A673 (cell line): ENCODE measurements at regions of chrX and their contacts with region 1.

Region 1: DNA sequence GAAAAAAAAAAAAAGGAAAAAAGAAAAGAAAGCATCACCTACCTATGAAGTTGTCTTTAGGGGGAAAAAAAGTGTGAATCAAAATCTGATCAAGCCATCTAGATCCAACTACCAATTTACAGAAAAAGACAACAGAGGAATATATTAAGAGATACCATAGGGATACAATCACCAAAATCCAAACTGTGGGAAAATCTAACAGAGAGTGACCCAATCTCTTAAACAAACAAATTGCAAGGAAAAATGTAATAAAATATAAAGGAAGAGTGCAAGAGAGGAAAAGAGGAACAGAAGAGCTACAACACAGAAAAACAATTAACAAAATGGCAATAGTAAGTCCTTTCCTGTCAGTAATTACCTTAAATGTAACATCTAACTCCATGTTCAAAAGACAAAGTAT is 19.0 kb downstream of the THOC2 start:
- DNase-seq: no peak
- H3K4me3 ChIP-seq: no peak overlapping the region
- H3K27ac ChIP-seq: no peak overlapping the region
- H3K4me1 ChIP-seq: no peaks in the 10 kb centered on the region
- H3K27me3 ChIP-seq: no peaks in the 10 kb centered on the region
- CTCF ChIP-seq: no peak

Region 2: DNA sequence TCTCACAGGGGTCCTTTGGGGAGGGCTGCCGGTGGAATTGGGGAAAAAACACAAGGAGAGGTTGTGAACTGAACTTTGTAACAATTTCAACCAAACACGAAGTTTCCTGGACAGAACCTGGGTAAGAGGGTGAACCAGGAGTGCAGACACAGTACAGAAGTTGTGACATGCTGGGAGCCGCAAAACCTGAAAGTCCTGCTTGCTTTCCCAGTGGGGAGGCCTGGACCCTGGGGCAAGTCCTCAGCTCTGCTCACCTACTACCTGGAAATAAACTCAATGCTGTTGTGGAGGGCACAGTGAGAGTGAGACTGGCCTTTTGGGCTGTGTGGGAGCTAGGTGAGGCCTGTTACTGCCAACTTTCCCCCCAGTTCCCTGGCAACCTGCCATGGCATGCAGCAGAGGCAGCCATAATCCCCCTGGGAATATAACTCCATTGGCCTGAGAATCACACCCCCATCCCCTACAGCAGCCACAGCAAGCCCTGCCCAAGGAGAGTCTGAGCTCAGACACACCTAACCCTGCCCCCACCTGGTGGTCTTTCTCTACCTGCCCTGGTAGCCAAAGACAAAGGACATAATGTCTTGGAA is 143.7 kb before region 1 on chrX:
- CTCF ChIA-PET with region 1: no interaction called
- POLR2A ChIA-PET with region 1: no interaction called
- intact Hi-C with region 1: no loop called
- DNase-seq: no peak
- H3K4me3 ChIP-seq: no peak overlapping the region
- H3K27ac ChIP-seq: no peak overlapping the region
- H3K4me1 ChIP-seq: no peaks in the 10 kb centered on the region
- H3K27me3 ChIP-seq: no peaks in the 10 kb centered on the region
- CTCF ChIP-seq: no peak

Region 3: GRCh38 chrX:123648028-123648810 is 65.6 kb before region 1 on chrX:
- CTCF ChIA-PET with region 1: no interaction called
- POLR2A ChIA-PET with region 1: no interaction called
- intact Hi-C with region 1: loop called (anchors 10 kb)
- DNase-seq: peak; percentile 44
- H3K4me3 ChIP-seq: no peak overlapping the region
- H3K27ac ChIP-seq: no peak overlapping the region
- H3K4me1 ChIP-seq: no peaks in the 10 kb centered on the region
- H3K27me3 ChIP-seq: no peaks in the 10 kb centered on the region
- CTCF ChIP-seq: no peak